ENCODE measurements at regions of chr12 and their contacts with region 1.

Region 1: DNA sequence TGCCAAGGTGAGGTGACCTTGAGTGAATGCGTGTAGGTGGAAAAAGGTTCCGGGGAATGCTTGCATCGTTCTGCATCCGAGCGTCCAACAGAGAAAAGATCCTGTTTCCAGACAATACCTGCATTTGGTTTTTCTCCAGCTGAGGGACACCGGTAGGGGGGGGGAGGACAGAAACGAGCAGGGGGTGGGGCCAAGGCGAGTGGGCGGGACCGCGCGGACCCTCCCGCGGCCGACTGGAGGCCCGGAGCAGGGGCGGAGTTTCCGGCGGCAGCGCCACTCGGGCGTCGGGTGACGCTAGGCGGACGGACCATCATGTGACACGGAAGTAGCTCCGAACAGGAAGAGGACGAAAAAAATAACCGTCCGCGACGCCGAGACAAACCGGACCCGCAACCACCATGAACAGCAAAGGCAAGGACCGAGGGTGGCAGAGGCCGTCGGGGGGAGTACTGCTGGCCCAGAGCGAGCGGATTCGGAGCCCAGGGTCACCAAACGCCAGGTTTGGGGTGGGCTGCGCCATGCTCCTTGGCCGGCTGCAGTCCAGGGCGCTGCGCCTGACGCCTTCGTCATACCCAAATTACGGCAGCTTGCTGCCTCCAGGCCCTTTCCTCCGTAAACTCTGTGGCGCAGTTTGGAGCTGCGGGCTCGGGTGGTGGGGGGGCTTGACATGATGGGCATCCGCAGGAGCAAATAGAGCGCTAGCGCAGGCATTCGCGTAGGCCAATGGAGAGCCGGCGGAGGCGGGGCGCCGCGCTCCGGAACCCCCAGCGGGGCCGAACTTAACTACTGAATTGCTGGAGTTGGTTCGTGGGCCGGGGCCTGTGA is at the start of gene DAZAP2:
- DNase-seq: peak; percentile 97 to 98 (median 98)
- ATAC-seq: peak; percentile 97 to 99 (median 98)
- H3K4me3 ChIP-seq: peak within 1 kb of the TSS; percentile 63 to 100 (median 97)
- H3K27ac ChIP-seq: peak within 1 kb of the TSS; percentile 95 to 100 (median 100)
- H3K4me1 ChIP-seq: peaks cover 0 to 49% (median 23%) of the 10 kb centered on the region in 12 donors
- H3K27me3 ChIP-seq: no peaks in the 10 kb centered on the region
- CTCF ChIP-seq: peak in 10 of 12 donors; percentile 13 to 43 (median 22)
- POLR2A ChIP-seq: peak; percentile 77 to 90
- total RNA-seq, gene DAZAP2: 147 to 313 (median 192) TPM

Region 2: GRCh38 chr12:50960130-50960529 is 278.6 kb before region 1 on chr12:
- intact Hi-C with region 1: no loop called
- DNase-seq: no peak
- ATAC-seq: no peak
- H3K4me3 ChIP-seq: no peak overlapping the region
- H3K27ac ChIP-seq: no peak overlapping the region
- H3K4me1 ChIP-seq: no peaks in the 10 kb centered on the region
- H3K27me3 ChIP-seq: no peaks in the 10 kb centered on the region
- CTCF ChIP-seq: no peak
- POLR2A ChIP-seq: no peak

Region 3: GRCh38 chr12:51083126-51083833 is 155.4 kb before region 1 on chr12 and contains the start of gene CSRNP2:
- intact Hi-C with region 1: loop called in 2 of 10 experiments (anchors 10 kb)
- DNase-seq: peak; percentile 97 to 98 (median 97)
- ATAC-seq: peak; percentile 99 to 100 (median 100)
- H3K4me3 ChIP-seq: peak within 1 kb of the TSS; percentile 74 to 99 (median 86)
- H3K27ac ChIP-seq: peak within 1 kb of the TSS; percentile 85 to 97 (median 92)
- H3K4me1 ChIP-seq: peaks cover 0 to 42% (median 18%) of the 10 kb centered on the region in 12 donors
- H3K27me3 ChIP-seq: no peaks in the 10 kb centered on the region
- CTCF ChIP-seq: peak in 4 of 12 donors; percentile 9 to 40 (median 21)
- POLR2A ChIP-seq: peak; percentile 99 to 100
- total RNA-seq, gene CSRNP2: 12.8 to 25.7 (median 18.5) TPM

Region 4: GRCh38 chr12:51172515-51173431 is 65.9 kb before region 1 on chr12 and contains the start of gene TFCP2:
- intact Hi-C with region 1: loop called in 2 of 10 experiments (anchors 1 to 2 kb)
- DNase-seq: peak; percentile 97 to 99 (median 98)
- ATAC-seq: peak; percentile 99
- H3K4me3 ChIP-seq: peak within 1 kb of the TSS; percentile 24 to 88 (median 74)
- H3K27ac ChIP-seq: peak within 1 kb of the TSS; percentile 86 to 98 (median 94)
- H3K4me1 ChIP-seq: peaks cover 0 to 34% (median 16%) of the 10 kb centered on the region in 12 donors
- H3K27me3 ChIP-seq: no peaks in the 10 kb centered on the region
- CTCF ChIP-seq: no peak
- POLR2A ChIP-seq: no peak
- total RNA-seq, gene TFCP2: 10.8 to 28.8 (median 20.7) TPM

Region 5: GRCh38 chr12:51217968-51218606 is 20.6 kb before region 1 on chr12 and contains the start of gene POU6F1:
- intact Hi-C with region 1: loop called in 5 of 10 experiments (anchors 1 to 2 kb)
- DNase-seq: peak; percentile 74 to 86 (median 79)
- ATAC-seq: peak; percentile 81 to 94 (median 92)
- H3K4me3 ChIP-seq: peak within 1 kb of the TSS; percentile 72 to 96 (median 84)
- H3K27ac ChIP-seq: peak within 1 kb of the TSS; percentile 85 to 99 (median 96)
- H3K4me1 ChIP-seq: peaks cover 0 to 27% (median 14%) of the 10 kb centered on the region in 12 donors
- H3K27me3 ChIP-seq: no peaks in the 10 kb centered on the region
- CTCF ChIP-seq: peak in 11 of 12 donors; percentile 36 to 68 (median 60)
- POLR2A ChIP-seq: peak in 1 of 2 donors; percentile 43
- total RNA-seq, gene POU6F1: 4.6 to 14.0 (median 6.8) TPM

Region 6: GRCh38 chr12:51270067-51270970 is 31.6 kb after region 1 on chr12 and contains the start of gene SMAGP:
- intact Hi-C with region 1: loop called in 1 of 10 experiments (anchors 2 kb)
- DNase-seq: peak; percentile 63 to 79 (median 72)
- ATAC-seq: peak; percentile 25 to 91 (median 78)
- H3K4me3 ChIP-seq: peak within 1 kb of the TSS; percentile 55 to 86 (median 72)
- H3K27ac ChIP-seq: peak within 1 kb of the TSS; percentile 6 to 87 (median 80)
- H3K4me1 ChIP-seq: peaks cover 0 to 20% (median 3%) of the 10 kb centered on the region in 12 donors
- H3K27me3 ChIP-seq: peaks cover 0 to 9% (median 0%) of the 10 kb centered on the region in 9 donors
- CTCF ChIP-seq: peak in 5 of 12 donors; percentile 8 to 33 (median 11)
- POLR2A ChIP-seq: no peak
- total RNA-seq, gene SMAGP: 2.0 to 7.4 (median 3.7) TPM

Region 7: GRCh38 chr12:51357374-51358047 is 118.8 kb after region 1 on chr12:
- intact Hi-C with region 1: no loop called
- DNase-seq: no peak
- ATAC-seq: no peak
- H3K4me3 ChIP-seq: no peak overlapping the region
- H3K27ac ChIP-seq: no peak overlapping the region
- H3K4me1 ChIP-seq: no peaks in the 10 kb centered on the region
- H3K27me3 ChIP-seq: no peaks in the 10 kb centered on the region
- CTCF ChIP-seq: no peak
- POLR2A ChIP-seq: no peak

Region 8: DNA sequence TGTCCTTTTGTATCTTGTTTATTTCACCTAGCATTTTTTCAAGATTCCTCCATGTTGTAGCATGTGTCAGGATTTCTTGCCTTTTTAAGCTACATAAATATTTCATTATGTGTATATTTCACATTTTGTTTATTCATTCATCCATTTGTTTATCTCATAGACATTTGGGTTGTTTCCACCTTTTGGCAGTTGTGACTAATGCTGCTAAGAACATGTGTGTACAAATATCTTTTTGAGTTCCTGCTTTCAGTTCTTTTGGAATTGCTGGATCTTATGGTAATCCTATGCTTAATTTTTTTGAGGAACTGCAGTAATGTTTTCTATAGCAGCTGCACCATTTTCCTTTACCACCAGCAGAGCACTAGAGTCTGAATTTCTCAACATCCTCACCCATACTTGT is 414.7 kb after region 1 on chr12:
- intact Hi-C with region 1: no loop called
- DNase-seq: no peak
- ATAC-seq: no peak
- H3K4me3 ChIP-seq: no peak overlapping the region
- H3K27ac ChIP-seq: no peak overlapping the region
- H3K4me1 ChIP-seq: no peaks in the 10 kb centered on the region
- H3K27me3 ChIP-seq: no peaks in the 10 kb centered on the region
- CTCF ChIP-seq: no peak
- POLR2A ChIP-seq: no peak